GM12878 (cell line): ENCODE measurements at regions of chr1 and their contacts with region 1.

Region 1: DNA sequence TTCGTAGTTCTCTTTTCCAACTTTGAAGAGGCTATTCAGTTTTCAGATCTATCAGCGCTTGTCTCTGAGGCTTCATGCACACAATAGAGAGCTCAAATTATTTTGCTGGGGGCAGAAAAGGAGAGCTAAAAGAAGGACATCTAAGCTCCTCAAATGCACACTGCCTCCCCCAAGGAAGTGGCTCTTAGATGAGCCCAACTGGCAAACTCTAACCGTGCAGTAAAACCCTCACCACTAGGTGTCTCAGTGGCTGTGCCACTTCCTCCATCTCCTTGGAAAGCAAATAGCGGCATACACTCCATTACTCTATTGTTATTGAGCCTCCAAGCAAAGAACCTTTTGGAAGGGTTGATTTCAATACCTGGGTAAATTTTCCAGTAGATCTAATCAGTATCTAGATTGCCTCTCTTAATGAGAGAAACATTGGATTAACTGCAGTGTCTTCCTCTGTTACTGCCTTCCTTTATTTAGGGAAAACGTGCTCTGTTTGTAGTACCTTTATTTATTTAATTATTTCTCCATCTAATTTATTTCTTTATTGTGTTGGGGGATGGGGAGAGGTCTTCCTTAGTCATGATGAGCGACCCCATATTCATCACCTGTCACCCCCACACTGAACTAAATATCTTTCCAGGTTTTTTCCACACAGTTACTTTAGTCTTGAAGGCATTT is 9.2 kb upstream of the SFPQ start:
- DNase-seq: peak; percentile 40
- ATAC-seq: peak; percentile 100
- H3K4me3 ChIP-seq: no peak overlapping the region
- H3K27ac ChIP-seq: no peak overlapping the region
- H3K4me1 ChIP-seq: no peaks in the 10 kb centered on the region
- H3K27me3 ChIP-seq: no peaks in the 10 kb centered on the region
- CTCF ChIP-seq: peak; percentile 92 to 93 (median 92); a peak in 5 of 6 replicates
- EP300 ChIP-seq: no peak
- POLR2A ChIP-seq: no peak
- RAD21 ChIP-seq: peak; percentile 87

Region 2: GRCh38 chr1:35268282-35269200 is 66.4 kb after region 1 on chr1 and contains the start of gene ZMYM4:
- CTCF ChIA-PET with region 1: interaction called, 10 read pairs
- POLR2A ChIA-PET with region 1: interaction called, 3 read pairs
- RAD21 ChIA-PET with region 1: interaction called, 5 read pairs
- SMC1A ChIA-PET with region 1: interaction called, 5 read pairs
- in situ Hi-C with region 1: no loop called
- intact Hi-C with region 1: no loop called
- DNase-seq: peak; percentile 81
- ATAC-seq: peak; percentile 97
- H3K4me3 ChIP-seq: peak within 1 kb of the TSS; percentile 87
- H3K27ac ChIP-seq: peak within 1 kb of the TSS; percentile 85
- H3K4me1 ChIP-seq: peaks cover 3% of the 10 kb centered on the region; the same call in 1 of the 2 replicates
- H3K27me3 ChIP-seq: no peaks in the 10 kb centered on the region
- CTCF ChIP-seq: 0 out of 6 replicates have a peak, but pooled peaks of 1 of the 3 experiments have one; percentile 5
- EP300 ChIP-seq: no peak
- POLR2A ChIP-seq: peak; percentile 90
- RAD21 ChIP-seq: no peak
- polyA plus RNA-seq, gene ZMYM4: 8.0 to 8.5 TPM

Region 3: GRCh38 chr1:35298464-35298863 is 96.3 kb after region 1 on chr1:
- CTCF ChIA-PET with region 1: interaction called, 49 read pairs
- POLR2A ChIA-PET with region 1: no interaction called
- RAD21 ChIA-PET with region 1: interaction called, 22 read pairs
- SMC1A ChIA-PET with region 1: interaction called, 32 read pairs
- in situ Hi-C with region 1: no loop called
- intact Hi-C with region 1: loop called (anchors 1 kb)
- DNase-seq: peak; percentile 32
- ATAC-seq: peak; percentile 94
- H3K4me3 ChIP-seq: no peak overlapping the region; the same call in 1 of the 2 replicates
- H3K27ac ChIP-seq: peak overlapping the region; percentile 35
- H3K4me1 ChIP-seq: peaks cover 18% of the 10 kb centered on the region
- H3K27me3 ChIP-seq: no peaks in the 10 kb centered on the region
- CTCF ChIP-seq: peak; percentile 54 to 83 (median 61)
- EP300 ChIP-seq: no peak
- POLR2A ChIP-seq: no peak
- RAD21 ChIP-seq: peak; percentile 83

Region 4: GRCh38 chr1:35443768-35444518 is 241.8 kb after region 1 on chr1:
- CTCF ChIA-PET with region 1: interaction called, 10 read pairs
- POLR2A ChIA-PET with region 1: no interaction called
- RAD21 ChIA-PET with region 1: interaction called, 4 read pairs
- SMC1A ChIA-PET with region 1: interaction called, 3 read pairs
- in situ Hi-C with region 1: no loop called
- intact Hi-C with region 1: no loop called
- DNase-seq: no peak
- ATAC-seq: no peak
- H3K4me3 ChIP-seq: no peak overlapping the region
- H3K27ac ChIP-seq: no peak overlapping the region
- H3K4me1 ChIP-seq: no peaks in the 10 kb centered on the region
- H3K27me3 ChIP-seq: no peaks in the 10 kb centered on the region
- CTCF ChIP-seq: peak; percentile 3 to 27 (median 3); a peak in 1 of 6 replicates
- EP300 ChIP-seq: no peak
- POLR2A ChIP-seq: no peak
- RAD21 ChIP-seq: peak; percentile 59

Region 5: GRCh38 chr1:37020653-37021277 is 1818.6 kb after region 1 on chr1:
- CTCF ChIA-PET with region 1: no interaction called
- POLR2A ChIA-PET with region 1: no interaction called
- RAD21 ChIA-PET with region 1: no interaction called
- SMC1A ChIA-PET with region 1: no interaction called
- in situ Hi-C with region 1: no loop called
- intact Hi-C with region 1: no loop called
- DNase-seq: no peak
- ATAC-seq: no peak
- H3K4me3 ChIP-seq: no peak overlapping the region
- H3K27ac ChIP-seq: no peak overlapping the region
- H3K4me1 ChIP-seq: no peaks in the 10 kb centered on the region
- H3K27me3 ChIP-seq: no peaks in the 10 kb centered on the region
- CTCF ChIP-seq: peak in 2 of 3 experiments; percentile 13 to 16; a peak in 2 of 6 replicates
- EP300 ChIP-seq: no peak
- POLR2A ChIP-seq: no peak
- RAD21 ChIP-seq: 0 out of 2 replicates have a peak, but pooled peaks have one; percentile 4